Right lobe of liver (tissue), 6 donors: ENCODE measurements at regions of chr16 and their contacts with region 1.

Region 1: DNA sequence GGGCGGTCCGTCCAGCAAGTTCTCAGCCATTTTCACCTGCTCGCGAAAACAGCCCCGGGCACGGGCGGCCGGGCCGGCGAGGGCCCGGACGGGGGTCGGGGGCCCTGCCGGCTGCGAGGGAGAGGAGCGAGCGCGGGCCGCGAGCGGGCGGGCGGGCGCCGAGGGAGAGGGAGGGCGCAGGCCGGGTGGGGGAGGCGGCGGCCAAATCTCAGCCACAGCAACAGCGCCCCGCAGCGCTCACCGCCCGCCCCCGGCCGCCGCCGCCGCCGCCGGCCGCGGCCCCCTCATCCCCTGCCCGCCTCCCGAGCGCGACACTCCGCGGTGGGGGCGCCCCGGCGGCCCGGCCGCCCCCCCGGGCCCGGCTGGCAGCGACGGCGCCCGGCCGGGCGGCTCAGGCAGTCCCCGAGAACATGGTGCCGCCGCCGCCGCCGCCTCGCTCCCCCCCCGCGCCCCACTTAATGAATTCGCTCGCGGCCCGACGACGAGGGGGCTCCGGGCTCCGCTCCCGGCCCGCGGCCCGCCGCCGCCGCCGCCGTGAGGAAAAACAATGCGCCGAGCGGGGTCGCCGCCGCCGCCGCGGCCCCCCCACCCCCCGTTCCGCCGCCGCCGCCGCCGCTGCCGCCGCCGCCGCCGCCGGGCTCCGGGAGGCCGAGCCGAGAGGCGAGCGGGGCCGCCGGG is 487 bp downstream of the CREBBP start:
- DNase-seq: peak; percentile 82 to 86 (median 85)
- ATAC-seq: peak; percentile 70 to 82 (median 78)
- H3K4me3 ChIP-seq: peak overlapping the region; percentile 76 to 92 (median 86)
- H3K27ac ChIP-seq: peak overlapping the region in 2 of 3 donors; percentile 83 to 88
- H3K4me1 ChIP-seq: peaks cover 0 to 39% (median 14%) of the 10 kb centered on the region in 4 donors
- H3K27me3 ChIP-seq: no peaks in the 10 kb centered on the region
- CTCF ChIP-seq: peak in 1 of 4 donors; percentile 44
- POLR2A ChIP-seq: no peak

Region 2: DNA sequence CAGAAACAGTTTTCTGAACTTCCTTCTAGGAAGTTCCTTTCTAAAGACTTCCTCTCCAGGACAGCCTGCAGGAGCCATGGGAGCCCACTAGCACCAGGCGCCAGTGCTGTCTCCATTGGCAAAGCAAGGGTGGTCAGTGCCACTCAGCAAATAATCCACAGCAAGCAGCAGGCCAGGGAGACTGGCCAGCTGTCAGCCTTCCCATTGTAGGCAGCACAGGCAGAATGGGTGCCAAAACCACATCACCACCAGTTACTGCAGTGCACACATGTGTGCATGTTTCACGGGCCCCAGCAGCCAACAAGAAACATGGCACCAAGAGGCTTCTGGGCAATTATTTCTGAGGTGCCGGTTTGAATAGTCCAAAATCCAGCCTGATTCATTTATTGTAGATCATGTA is 198.8 kb before region 1 on chr16:
- intact Hi-C with region 1: loop called in 1 of 2 experiments (anchors 10 kb)
- DNase-seq: peak in 2 of 3 donors; percentile 67 to 81
- ATAC-seq: peak; percentile 61 to 76 (median 72)
- H3K4me3 ChIP-seq: no peak overlapping the region
- H3K27ac ChIP-seq: no peak overlapping the region
- H3K4me1 ChIP-seq: peaks cover 0 to 19% (median 6%) of the 10 kb centered on the region in 4 donors
- H3K27me3 ChIP-seq: no peaks in the 10 kb centered on the region
- CTCF ChIP-seq: no peak
- POLR2A ChIP-seq: no peak

Region 3: DNA sequence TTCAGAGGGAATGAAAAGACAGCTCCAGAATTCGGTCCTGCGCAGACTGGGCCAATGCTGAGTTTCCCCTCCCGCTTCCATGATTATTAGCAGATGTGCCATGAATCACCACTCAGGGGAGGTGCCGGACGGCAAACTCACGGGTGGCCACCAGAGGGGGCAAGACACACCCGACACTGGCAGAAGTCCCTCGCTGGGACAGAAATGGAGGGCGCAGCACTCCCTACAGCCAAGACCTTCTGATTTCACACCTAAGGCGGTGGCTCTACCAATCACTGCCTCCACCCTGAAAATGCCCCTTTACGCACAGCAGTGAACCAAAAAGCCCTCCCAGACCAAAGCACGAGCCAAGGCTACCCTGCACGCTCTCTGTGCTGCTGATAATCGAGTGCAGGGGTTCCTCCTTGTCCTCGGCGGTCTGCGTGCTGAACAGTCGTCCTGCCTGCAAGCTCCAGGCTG is 189.5 kb before region 1 on chr16:
- intact Hi-C with region 1: loop called (anchors 10 kb)
- DNase-seq: peak; percentile 86 to 87 (median 86)
- ATAC-seq: peak; percentile 94 to 97 (median 96)
- H3K4me3 ChIP-seq: peak overlapping the region in 1 of 3 donors; percentile 12
- H3K27ac ChIP-seq: no peak overlapping the region
- H3K4me1 ChIP-seq: peaks cover 0 to 34% (median 15%) of the 10 kb centered on the region in 4 donors
- H3K27me3 ChIP-seq: no peaks in the 10 kb centered on the region
- CTCF ChIP-seq: peak; percentile 93 to 98 (median 96)
- POLR2A ChIP-seq: no peak

Region 4: DNA sequence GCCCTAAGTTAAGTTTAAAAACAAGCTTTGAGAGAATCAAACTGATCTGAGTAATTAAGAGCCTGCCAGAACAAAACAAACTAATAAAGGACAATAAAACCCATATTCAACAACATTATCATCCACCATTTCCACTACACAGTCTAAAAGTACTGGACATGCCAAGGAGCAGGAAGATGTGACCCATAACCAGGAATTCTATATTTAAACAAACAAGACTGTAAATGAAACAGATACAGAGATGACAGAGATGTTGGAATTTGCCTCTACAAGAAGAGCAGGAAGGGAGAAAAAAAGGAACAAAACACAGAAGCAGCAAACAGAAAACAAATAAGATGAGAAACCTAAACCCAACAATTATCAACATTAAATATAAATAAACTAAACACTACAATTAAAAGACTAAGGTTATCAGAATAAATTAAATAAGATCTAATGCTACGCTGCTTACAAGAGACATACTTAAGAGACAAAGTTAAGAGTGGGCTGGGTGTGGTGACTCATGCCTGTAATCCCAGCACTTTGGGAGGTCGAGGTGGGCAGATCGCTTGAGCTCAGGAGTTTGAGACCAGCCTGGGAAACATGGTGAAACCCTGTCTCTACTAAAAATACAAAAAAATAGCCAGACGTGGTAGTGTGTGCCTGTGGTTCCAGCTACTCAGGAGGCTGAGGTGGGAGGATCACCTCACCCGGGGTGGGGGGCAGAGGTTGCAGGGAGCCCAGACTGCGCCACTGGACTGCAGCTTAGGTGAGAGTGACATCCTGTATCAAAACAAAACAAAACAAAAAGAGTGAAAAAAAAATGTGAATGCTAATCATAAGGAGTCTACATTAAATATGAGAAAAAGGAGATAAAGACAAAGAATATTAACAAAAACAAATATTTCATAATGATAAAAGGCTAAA is 50.1 kb before region 1 on chr16:
- intact Hi-C with region 1: no loop called
- DNase-seq: no peak
- ATAC-seq: no peak
- H3K4me3 ChIP-seq: no peak overlapping the region
- H3K27ac ChIP-seq: no peak overlapping the region
- H3K4me1 ChIP-seq: peaks cover 0 to 12% (median 6%) of the 10 kb centered on the region in 4 donors
- H3K27me3 ChIP-seq: no peaks in the 10 kb centered on the region
- CTCF ChIP-seq: no peak
- POLR2A ChIP-seq: no peak